ENCODE measurements at regions of chr1 and their contacts with region 1.

Region 1: GRCh38 chr1:32939655-32940371 is 24.8 kb downstream of the RNF19B start:
- DNase-seq: no peak
- H3K4me3 ChIP-seq: no peak overlapping the region
- H3K27ac ChIP-seq: peak overlapping the region; percentile 82
- H3K4me1 ChIP-seq: peaks cover 35% of the 10 kb centered on the region
- H3K27me3 ChIP-seq: no peaks in the 10 kb centered on the region
- CTCF ChIP-seq: no peak
- POLR2A ChIP-seq: no peak

Region 2: DNA sequence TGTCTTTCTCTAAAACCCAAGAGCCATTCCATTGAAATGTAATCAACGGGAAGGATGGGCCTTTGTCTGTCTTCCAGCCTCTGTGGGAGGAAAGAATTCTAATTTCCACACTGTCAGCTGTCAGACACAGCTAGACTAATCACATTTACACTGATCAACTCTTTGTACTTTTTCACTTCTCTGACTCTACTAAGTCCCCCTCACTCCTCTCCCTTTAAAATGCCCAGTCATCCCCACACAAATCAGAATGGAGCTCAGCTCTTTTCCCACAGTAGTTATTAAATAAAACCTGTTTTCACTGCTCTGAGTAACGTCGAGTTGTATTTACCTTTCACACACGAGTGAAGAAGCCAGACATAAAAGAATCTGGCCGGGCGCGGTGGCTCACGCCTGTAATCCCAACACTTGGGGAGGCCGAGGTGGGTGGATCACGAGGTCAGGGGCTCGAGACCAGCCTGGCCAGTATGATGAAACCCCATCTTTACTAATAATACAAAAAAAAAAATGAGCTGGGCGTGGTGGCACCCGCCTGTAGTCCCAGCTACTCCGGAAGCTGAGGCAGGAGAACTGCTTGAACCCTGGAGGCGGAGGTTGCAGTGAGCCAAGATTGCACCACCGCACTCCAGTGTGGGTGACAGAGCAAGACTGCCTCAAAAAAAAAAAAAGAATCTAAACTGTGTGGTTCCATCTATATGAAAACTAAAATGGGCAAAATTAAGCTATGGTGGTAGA is 302.7 kb before region 1 on chr1:
- intact Hi-C with region 1: no loop called
- DNase-seq: no peak
- H3K4me3 ChIP-seq: no peak overlapping the region
- H3K27ac ChIP-seq: no peak overlapping the region
- H3K4me1 ChIP-seq: no peaks in the 10 kb centered on the region
- H3K27me3 ChIP-seq: no peaks in the 10 kb centered on the region
- CTCF ChIP-seq: no peak
- POLR2A ChIP-seq: no peak

Region 3: GRCh38 chr1:32724678-32725614 is 214.9 kb before region 1 on chr1:
- intact Hi-C with region 1: no loop called
- DNase-seq: no peak
- H3K4me3 ChIP-seq: no peak overlapping the region
- H3K27ac ChIP-seq: peak overlapping the region; percentile 62
- H3K4me1 ChIP-seq: peaks cover 14% of the 10 kb centered on the region
- H3K27me3 ChIP-seq: no peaks in the 10 kb centered on the region
- CTCF ChIP-seq: no peak
- POLR2A ChIP-seq: no peak

Region 4: GRCh38 chr1:33007190-33008050 is 67.6 kb after region 1 on chr1:
- intact Hi-C with region 1: loop called (anchors 10 kb)
- DNase-seq: peak in 1 of 2 donors; percentile 65
- H3K4me3 ChIP-seq: no peak overlapping the region
- H3K27ac ChIP-seq: no peak overlapping the region
- H3K4me1 ChIP-seq: peaks cover 57% of the 10 kb centered on the region
- H3K27me3 ChIP-seq: no peaks in the 10 kb centered on the region
- CTCF ChIP-seq: peak in 2 of 3 experiments; percentile 23 to 27
- POLR2A ChIP-seq: no peak

Region 5: GRCh38 chr1:33045246-33045645 is 105.4 kb after region 1 on chr1:
- intact Hi-C with region 1: loop called (anchors 10 kb)
- DNase-seq: no peak
- H3K4me3 ChIP-seq: no peak overlapping the region
- H3K27ac ChIP-seq: no peak overlapping the region
- H3K4me1 ChIP-seq: no peaks in the 10 kb centered on the region
- H3K27me3 ChIP-seq: no peaks in the 10 kb centered on the region
- CTCF ChIP-seq: no peak
- POLR2A ChIP-seq: no peak